K562 (cell line): ENCODE measurements at regions of chr3 and their contacts with region 1.

Region 1: GRCh38 chr3:52385157-52385556 is 59.7 kb downstream of the SEMA3G start:
- DNase-seq: peak; percentile 79 to 83 (median 80)
- ATAC-seq: peak; percentile 94
- H3K4me3 ChIP-seq: no peak overlapping the region
- H3K27ac ChIP-seq: no peak overlapping the region
- H3K4me1 ChIP-seq: peaks cover 0 to 44% of the 10 kb centered on the region in 2 experiments; a peak in 2 of 5 replicates
- H3K27me3 ChIP-seq: no peaks in the 10 kb centered on the region
- CTCF ChIP-seq: peak; percentile 91 to 99 (median 99)
- EP300 ChIP-seq: no peak
- POLR2A ChIP-seq: no peak
- RAD21 ChIP-seq: peak; percentile 25 to 80

Region 2: GRCh38 chr3:52220380-52221026 is 164.7 kb before region 1 on chr3:
- CTCF ChIA-PET with region 1: interaction called, 3 read pairs
- POLR2A ChIA-PET with region 1: interaction called, 3 read pairs
- in situ Hi-C with region 1: no loop called
- intact Hi-C with region 1: loop called (anchors 5 kb)
- DNase-seq: peak; percentile 75 to 82 (median 78)
- ATAC-seq: peak; percentile 91
- H3K4me3 ChIP-seq: no peak overlapping the region
- H3K27ac ChIP-seq: no peak overlapping the region
- H3K4me1 ChIP-seq: peaks cover 27 to 52% of the 10 kb centered on the region in 2 experiments
- H3K27me3 ChIP-seq: no peaks in the 10 kb centered on the region
- CTCF ChIP-seq: peak; percentile 83 to 87 (median 86)
- EP300 ChIP-seq: no peak
- POLR2A ChIP-seq: no peak
- RAD21 ChIP-seq: peak; percentile 39 to 75; a peak in 3 of 4 replicates

Region 3: GRCh38 chr3:52291508-52292181 is 93.5 kb before region 1 on chr3:
- CTCF ChIA-PET with region 1: interaction called, 10 read pairs
- POLR2A ChIA-PET with region 1: interaction called, 4 read pairs
- in situ Hi-C with region 1: loop called (anchors 10 kb)
- intact Hi-C with region 1: loop called (anchors 1 kb)
- DNase-seq: peak in 2 of 4 experiments; percentile 52 to 57
- ATAC-seq: peak; percentile 48
- H3K4me3 ChIP-seq: no peak overlapping the region
- H3K27ac ChIP-seq: no peak overlapping the region
- H3K4me1 ChIP-seq: peaks cover 12 to 26% of the 10 kb centered on the region in 2 experiments; a peak in 4 of 5 replicates
- H3K27me3 ChIP-seq: no peaks in the 10 kb centered on the region
- CTCF ChIP-seq: peak; percentile 60 to 77 (median 77)
- EP300 ChIP-seq: no peak
- POLR2A ChIP-seq: no peak
- RAD21 ChIP-seq: peak; percentile 80 to 87

Region 4: DNA sequence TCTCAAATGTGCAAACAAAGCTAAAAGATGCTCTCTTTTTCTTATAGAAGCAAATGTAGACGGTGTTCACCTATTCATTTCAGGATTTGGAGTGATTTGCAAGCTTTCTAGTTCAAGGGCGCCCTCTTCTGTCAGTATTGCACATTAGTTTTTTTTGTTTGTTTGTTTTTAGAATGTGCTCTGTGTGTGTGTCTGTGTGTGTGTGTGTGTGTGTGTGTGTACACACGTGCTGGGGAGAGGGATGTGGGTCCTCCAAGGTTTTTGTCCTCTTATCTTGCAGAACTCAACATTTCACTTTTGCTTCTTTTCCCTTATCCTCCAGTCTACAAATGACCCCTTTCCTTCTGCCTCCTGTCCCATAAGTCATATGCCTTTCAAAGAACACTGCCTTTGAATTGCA is 45.5 kb before region 1 on chr3:
- CTCF ChIA-PET with region 1: no interaction called
- POLR2A ChIA-PET with region 1: no interaction called
- in situ Hi-C with region 1: no loop called
- intact Hi-C with region 1: loop called (anchors 1 kb)
- DNase-seq: peak; percentile 38 to 77 (median 41)
- ATAC-seq: peak; percentile 64
- H3K4me3 ChIP-seq: no peak overlapping the region
- H3K27ac ChIP-seq: no peak overlapping the region
- H3K4me1 ChIP-seq: no peaks in the 10 kb centered on the region
- H3K27me3 ChIP-seq: no peaks in the 10 kb centered on the region
- CTCF ChIP-seq: peak; percentile 56 to 79 (median 66); a peak in 5 of 6 replicates
- EP300 ChIP-seq: no peak
- POLR2A ChIP-seq: no peak
- RAD21 ChIP-seq: peak; percentile 93 to 95